ENCODE measurements at regions of chr10 and their contacts with region 1.

Region 1: GRCh38 chr10:113616233-113617074 is 47.4 kb downstream of the NRAP start:
- H3K4me3 ChIP-seq: no peak overlapping the region
- H3K27ac ChIP-seq: no peak overlapping the region
- H3K4me1 ChIP-seq: no peaks in the 10 kb centered on the region
- CTCF ChIP-seq: no peak

Region 2: GRCh38 chr10:113441220-113441619 is 175.2 kb before region 1 on chr10:
- CTCF ChIA-PET with region 1: no interaction called
- POLR2A ChIA-PET with region 1: no interaction called
- H3K4me3 ChIP-seq: no peak overlapping the region
- H3K27ac ChIP-seq: no peak overlapping the region
- H3K4me1 ChIP-seq: no peaks in the 10 kb centered on the region
- CTCF ChIP-seq: no peak

Region 3: DNA sequence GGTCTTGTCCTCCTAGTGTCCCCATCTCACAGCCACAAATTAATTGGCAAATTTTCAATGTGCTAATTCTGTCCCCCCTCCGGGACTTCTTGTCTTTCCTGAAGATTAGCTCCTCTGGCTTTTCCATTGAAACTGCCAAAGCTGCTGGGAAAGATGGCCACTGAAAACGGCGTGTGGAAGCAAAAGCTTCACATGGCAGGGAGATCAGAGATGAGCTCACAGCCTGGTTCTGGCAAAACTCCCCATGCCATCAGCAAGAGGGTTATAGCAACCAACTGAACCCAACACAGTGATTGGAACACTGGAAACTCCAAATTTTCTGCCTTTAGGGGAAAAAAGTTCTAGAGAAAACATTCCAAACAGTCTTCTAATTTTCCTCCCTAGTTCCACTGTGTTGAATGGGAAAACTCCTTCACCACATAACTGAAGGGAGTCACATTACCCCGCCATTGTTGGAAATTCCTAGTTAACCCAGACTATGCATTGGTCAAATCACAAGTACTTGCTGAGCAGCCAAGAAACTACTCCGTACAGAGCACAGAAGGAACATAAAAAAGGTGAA is 10.4 kb after region 1 on chr10:
- CTCF ChIA-PET with region 1: interaction called, 31 read pairs
- POLR2A ChIA-PET with region 1: no interaction called
- H3K4me3 ChIP-seq: no peak overlapping the region
- H3K27ac ChIP-seq: no peak overlapping the region
- H3K4me1 ChIP-seq: 0 out of 2 replicates have a peak, but pooled peaks cover 3% of the 10 kb centered on the region
- CTCF ChIP-seq: no peak

Region 4: GRCh38 chr10:113639966-113640365 is 23.5 kb after region 1 on chr10:
- CTCF ChIA-PET with region 1: interaction called, 10 read pairs
- POLR2A ChIA-PET with region 1: no interaction called
- H3K4me3 ChIP-seq: no peak overlapping the region
- H3K27ac ChIP-seq: no peak overlapping the region
- H3K4me1 ChIP-seq: peaks cover 9% of the 10 kb centered on the region; the same call in 1 of the 2 replicates
- CTCF ChIP-seq: no peak